ENCODE measurements at regions of chr6 and their contacts with region 1.

Region 1: GRCh38 chr6:111478749-111479148 is 4.3 kb downstream of the REV3L start:
- DNase-seq: peak; percentile 61
- ATAC-seq: no peak
- H3K4me3 ChIP-seq: no peak overlapping the region; a peak in 1 of 4 replicates
- H3K27ac ChIP-seq: peak overlapping the region; percentile 98
- H3K4me1 ChIP-seq: peaks cover 57% of the 10 kb centered on the region
- H3K27me3 ChIP-seq: no peaks in the 10 kb centered on the region
- CTCF ChIP-seq: peak; percentile 68

Region 2: DNA sequence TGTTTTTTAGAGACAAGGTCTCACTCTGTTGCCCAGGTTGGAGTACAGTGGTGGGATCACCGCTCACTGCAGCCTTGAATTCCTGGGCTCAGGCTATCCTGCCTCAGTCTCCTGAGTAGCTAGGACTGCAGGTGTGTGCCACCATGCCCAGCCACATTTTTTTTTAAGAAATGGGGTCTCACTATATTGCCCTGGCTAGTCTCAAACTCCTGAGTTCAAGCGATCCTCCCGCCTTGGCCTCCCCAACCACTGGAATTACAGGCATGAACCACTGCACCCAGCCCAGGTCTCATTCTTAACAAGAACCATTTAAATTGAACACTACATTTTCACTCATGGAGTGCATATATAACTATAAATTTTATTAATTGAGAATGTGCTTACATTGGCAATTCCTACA is 476.4 kb before region 1 on chr6:
- CTCF ChIA-PET with region 1: no interaction called
- POLR2A ChIA-PET with region 1: interaction called, 10 read pairs
- in situ Hi-C with region 1: no loop called
- intact Hi-C with region 1: no loop called
- DNase-seq: no peak
- ATAC-seq: no peak
- H3K4me3 ChIP-seq: no peak overlapping the region
- H3K27ac ChIP-seq: no peak overlapping the region
- H3K4me1 ChIP-seq: no peaks in the 10 kb centered on the region
- H3K27me3 ChIP-seq: no peaks in the 10 kb centered on the region
- CTCF ChIP-seq: no peak

Region 3: GRCh38 chr6:111228094-111228493 is 250.7 kb before region 1 on chr6:
- CTCF ChIA-PET with region 1: no interaction called
- POLR2A ChIA-PET with region 1: no interaction called
- in situ Hi-C with region 1: no loop called
- intact Hi-C with region 1: no loop called
- DNase-seq: no peak
- ATAC-seq: no peak
- H3K4me3 ChIP-seq: no peak overlapping the region
- H3K27ac ChIP-seq: no peak overlapping the region
- H3K4me1 ChIP-seq: no peaks in the 10 kb centered on the region
- H3K27me3 ChIP-seq: peaks cover 12% of the 10 kb centered on the region; the same call in 1 of the 2 replicates
- CTCF ChIP-seq: no peak

Region 4: GRCh38 chr6:111259089-111259831 is 219.5 kb before region 1 on chr6:
- CTCF ChIA-PET with region 1: interaction called, 12 read pairs
- POLR2A ChIA-PET with region 1: interaction called, 8 read pairs
- in situ Hi-C with region 1: no loop called
- intact Hi-C with region 1: loop called (anchors 2 kb)
- DNase-seq: peak; percentile 99
- ATAC-seq: peak; percentile 98
- H3K4me3 ChIP-seq: peak overlapping the region; percentile 77 to 87
- H3K27ac ChIP-seq: peak overlapping the region; percentile 90
- H3K4me1 ChIP-seq: peaks cover 27% of the 10 kb centered on the region
- H3K27me3 ChIP-seq: peaks cover 14% of the 10 kb centered on the region
- CTCF ChIP-seq: peak; percentile 100

Region 5: DNA sequence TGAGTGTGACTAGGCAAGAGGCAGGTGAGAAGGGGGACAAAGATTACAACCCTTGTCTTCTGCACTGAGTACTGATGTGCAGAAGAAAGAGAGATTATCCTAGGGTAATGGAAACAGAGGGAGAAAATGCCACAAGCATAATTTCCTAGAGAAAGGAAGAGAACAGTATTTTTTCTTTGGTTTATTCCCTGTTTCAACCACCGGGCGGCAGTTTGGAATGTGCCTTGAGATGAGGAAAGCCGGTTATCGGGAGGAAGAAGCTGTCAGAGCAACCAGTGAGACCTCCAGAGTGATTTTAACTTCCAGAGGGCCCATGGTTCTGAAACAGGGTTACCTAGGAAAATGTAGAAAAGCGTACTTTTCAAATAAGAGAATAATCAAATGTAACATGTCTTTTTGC is 117.1 kb before region 1 on chr6:
- CTCF ChIA-PET with region 1: interaction called, 3 read pairs
- POLR2A ChIA-PET with region 1: no interaction called
- in situ Hi-C with region 1: no loop called
- intact Hi-C with region 1: loop called (anchors 2 kb)
- DNase-seq: peak; percentile 17
- ATAC-seq: peak; percentile 85
- H3K4me3 ChIP-seq: no peak overlapping the region
- H3K27ac ChIP-seq: no peak overlapping the region
- H3K4me1 ChIP-seq: no peaks in the 10 kb centered on the region; the same call in 1 of the 2 replicates
- H3K27me3 ChIP-seq: no peaks in the 10 kb centered on the region
- CTCF ChIP-seq: peak; percentile 78

Region 6: DNA sequence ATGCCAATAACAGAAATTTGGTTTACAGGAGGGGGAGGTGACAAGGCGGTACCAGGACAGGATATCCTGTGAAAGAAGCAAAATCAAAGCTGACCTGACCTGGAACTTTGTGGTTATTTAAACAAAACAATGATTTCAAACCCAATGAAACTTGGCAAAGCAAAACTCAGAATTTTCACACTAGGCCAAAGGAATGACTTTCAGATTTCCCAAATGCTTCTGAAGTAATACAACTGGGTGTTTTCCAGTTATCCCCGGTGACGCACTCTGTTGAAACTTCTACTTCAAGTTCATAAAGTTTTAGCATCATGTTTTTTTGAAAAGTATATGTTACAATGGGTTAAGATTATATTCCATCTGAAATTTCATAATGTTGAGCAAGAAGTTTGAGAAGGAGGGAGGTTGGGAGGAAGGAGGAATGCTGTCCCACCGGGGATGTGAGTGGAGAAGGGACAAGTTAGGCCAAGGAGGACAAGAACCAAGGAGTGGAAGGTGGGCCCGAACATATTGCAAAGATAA is 205.1 kb after region 1 on chr6:
- CTCF ChIA-PET with region 1: no interaction called
- POLR2A ChIA-PET with region 1: no interaction called
- in situ Hi-C with region 1: no loop called
- intact Hi-C with region 1: no loop called
- DNase-seq: no peak
- ATAC-seq: no peak
- H3K4me3 ChIP-seq: no peak overlapping the region
- H3K27ac ChIP-seq: no peak overlapping the region
- H3K4me1 ChIP-seq: peaks cover 5% of the 10 kb centered on the region; the same call in 1 of the 2 replicates
- H3K27me3 ChIP-seq: peaks cover 4% of the 10 kb centered on the region
- CTCF ChIP-seq: no peak